Transverse colon (tissue), 4 donors: ENCODE measurements at regions of chr19 and their contacts with region 1.

Region 1: GRCh38 chr19:14147797-14148605 is 11.6 kb upstream of the ASF1B start:
- DNase-seq: peak; percentile 71
- H3K4me3 ChIP-seq: no peak overlapping the region
- H3K27ac ChIP-seq: peak overlapping the region; percentile 68 to 84 (median 77)
- H3K4me1 ChIP-seq: peaks cover 19 to 31% (median 26%) of the 10 kb centered on the region in 4 donors
- H3K27me3 ChIP-seq: no peaks in the 10 kb centered on the region
- CTCF ChIP-seq: peak; percentile 76 to 88 (median 82)
- EP300 ChIP-seq: no peak
- POLR2A ChIP-seq: no peak

Region 2: DNA sequence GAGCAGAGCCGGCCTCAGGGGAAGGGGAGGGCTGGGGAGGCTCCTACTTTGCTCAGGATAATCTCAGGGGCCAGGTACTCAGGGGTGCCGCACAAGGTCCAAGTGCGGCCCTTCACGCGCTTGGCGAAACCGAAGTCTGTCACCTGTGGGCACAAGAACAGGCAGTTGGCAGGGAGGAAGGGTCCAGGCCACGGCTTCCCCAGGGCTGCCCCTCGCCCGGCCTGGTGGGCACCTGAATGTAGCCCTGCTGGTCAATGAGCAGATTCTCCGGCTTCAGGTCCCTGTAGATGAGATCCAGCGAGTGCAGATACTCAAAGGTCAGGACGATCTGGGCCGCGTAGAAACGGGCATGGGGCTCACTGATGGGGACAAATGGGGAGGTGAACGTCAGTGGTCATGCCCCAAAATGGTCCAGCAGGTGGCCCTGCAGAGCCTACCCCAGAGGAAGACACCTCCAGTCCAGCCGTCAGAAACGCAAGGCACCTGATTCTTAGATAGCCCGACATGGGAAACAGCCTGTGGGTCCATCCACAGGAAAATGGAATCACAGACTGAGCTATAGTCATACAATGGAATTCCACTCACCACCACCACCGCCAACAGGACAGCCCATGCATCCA is 50.4 kb before region 1 on chr19:
- in situ Hi-C with region 1: no loop called
- intact Hi-C with region 1: no loop called
- DNase-seq: no peak
- H3K4me3 ChIP-seq: no peak overlapping the region
- H3K27ac ChIP-seq: no peak overlapping the region
- H3K4me1 ChIP-seq: no peaks in the 10 kb centered on the region
- H3K27me3 ChIP-seq: no peaks in the 10 kb centered on the region
- CTCF ChIP-seq: peak in 1 of 5 experiments; percentile 9
- EP300 ChIP-seq: no peak
- POLR2A ChIP-seq: no peak

Region 3: GRCh38 chr19:14237014-14237941 is 89.3 kb after region 1 on chr19:
- in situ Hi-C with region 1: no loop called
- intact Hi-C with region 1: no loop called
- DNase-seq: no peak
- H3K4me3 ChIP-seq: no peak overlapping the region
- H3K27ac ChIP-seq: no peak overlapping the region
- H3K4me1 ChIP-seq: peaks cover 0 to 4% (median 0%) of the 10 kb centered on the region in 4 donors
- H3K27me3 ChIP-seq: no peaks in the 10 kb centered on the region
- CTCF ChIP-seq: no peak
- EP300 ChIP-seq: no peak
- POLR2A ChIP-seq: no peak

Region 4: DNA sequence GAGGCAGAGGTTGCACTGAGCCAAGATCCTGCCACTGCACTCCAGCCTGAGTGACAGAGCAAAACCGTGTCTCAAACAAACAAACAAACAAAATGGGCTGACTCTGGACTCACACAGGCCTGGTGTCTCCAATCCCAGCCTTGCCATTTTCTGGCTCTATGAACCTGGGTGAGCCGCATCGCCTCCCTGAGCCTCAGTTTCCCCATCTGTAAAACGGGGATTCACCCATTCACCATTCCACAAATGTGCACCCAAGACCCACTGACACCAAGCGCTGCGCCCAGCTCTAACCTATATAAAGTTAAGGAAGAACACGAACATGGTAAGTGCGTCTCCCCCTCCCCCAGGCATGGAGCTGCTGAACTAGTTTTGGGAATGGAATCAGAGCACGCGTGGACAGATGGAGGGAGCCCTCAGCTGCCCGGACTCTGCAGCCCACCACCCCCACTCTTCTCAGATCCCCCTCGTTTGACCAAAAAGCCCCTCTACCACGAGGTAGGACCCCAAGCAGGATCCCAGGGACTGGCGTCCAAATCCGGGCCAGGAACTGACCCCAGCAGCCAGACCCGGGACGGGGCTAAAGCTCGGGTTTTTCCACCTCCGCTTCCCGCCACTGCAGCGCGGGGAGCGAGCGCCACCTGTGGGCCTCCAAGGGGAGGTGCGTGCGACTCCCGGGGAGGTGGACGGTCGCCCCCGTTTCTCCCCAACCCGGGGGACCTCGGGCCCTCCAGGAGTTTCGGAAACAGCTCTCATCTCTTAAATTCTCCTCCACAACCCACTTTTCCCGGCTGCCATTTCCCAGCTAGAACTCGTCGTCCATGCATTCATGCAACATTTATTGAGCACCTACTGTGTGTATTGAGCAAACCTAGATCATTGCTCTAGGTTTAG is 200.2 kb after region 1 on chr19:
- in situ Hi-C with region 1: no loop called
- intact Hi-C with region 1: loop called (anchors 5 kb)
- DNase-seq: peak; percentile 77
- H3K4me3 ChIP-seq: peak overlapping the region in 2 of 4 donors; percentile 26 to 34
- H3K27ac ChIP-seq: peak overlapping the region in 2 of 4 donors; percentile 2 to 13
- H3K4me1 ChIP-seq: peaks cover 0 to 17% (median 12%) of the 10 kb centered on the region in 4 donors
- H3K27me3 ChIP-seq: no peaks in the 10 kb centered on the region
- CTCF ChIP-seq: peak; percentile 96 to 99 (median 97)
- EP300 ChIP-seq: no peak
- POLR2A ChIP-seq: no peak

Region 5: DNA sequence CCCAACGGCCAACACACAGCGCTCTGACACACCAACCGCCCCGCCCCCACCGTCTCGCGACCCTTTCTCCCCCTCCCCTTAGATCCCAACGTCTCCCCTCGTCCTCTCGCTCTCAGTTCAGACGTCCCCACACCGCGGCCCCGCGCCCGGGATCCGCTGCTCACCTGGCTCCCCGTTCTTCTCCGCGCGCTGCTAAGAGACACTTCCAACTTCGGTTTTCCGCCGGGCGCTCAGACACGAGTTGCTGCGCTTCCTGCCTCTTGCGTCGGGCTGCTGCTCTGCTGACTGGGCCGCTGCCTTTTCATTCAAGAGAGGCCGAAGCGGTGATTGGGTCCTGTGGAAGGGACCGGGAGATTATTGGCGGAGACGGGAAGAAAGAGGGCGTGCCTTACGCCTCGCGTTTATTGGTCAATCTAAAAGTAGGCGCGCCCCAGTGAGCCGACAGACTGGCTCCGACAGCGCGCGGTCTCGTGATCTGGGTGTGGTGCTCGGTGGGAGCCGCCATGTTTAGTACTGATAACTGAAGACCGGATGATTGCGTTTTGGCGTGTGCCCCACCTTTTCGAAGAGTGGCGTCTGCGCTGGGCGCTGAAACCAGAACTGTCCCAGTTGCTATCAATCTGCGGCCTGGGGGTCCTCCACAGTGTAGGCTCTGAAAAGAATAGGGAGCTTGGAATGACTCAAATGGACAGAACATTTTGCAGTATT is 271.3 kb after region 1 on chr19 and contains the start of gene DDX39A:
- in situ Hi-C with region 1: no loop called
- intact Hi-C with region 1: loop called (anchors 5 kb)
- DNase-seq: peak; percentile 98
- H3K4me3 ChIP-seq: peak within 1 kb of the TSS; percentile 73 to 100 (median 83)
- H3K27ac ChIP-seq: peak within 1 kb of the TSS; percentile 94 to 100 (median 97)
- H3K4me1 ChIP-seq: peaks cover 17 to 34% (median 23%) of the 10 kb centered on the region in 4 donors
- H3K27me3 ChIP-seq: no peaks in the 10 kb centered on the region
- CTCF ChIP-seq: no peak
- EP300 ChIP-seq: no peak
- POLR2A ChIP-seq: peak; percentile 95
- total RNA-seq, gene DDX39A: 66.4 to 286 (median 163) TPM

Region 6: GRCh38 chr19:14472202-14472938 is 324.4 kb after region 1 on chr19:
- in situ Hi-C with region 1: no loop called
- intact Hi-C with region 1: loop called (anchors 10 kb)
- DNase-seq: peak; percentile 76
- H3K4me3 ChIP-seq: peak overlapping the region in 2 of 4 donors; percentile 25 to 38
- H3K27ac ChIP-seq: no peak overlapping the region
- H3K4me1 ChIP-seq: peaks cover 19 to 38% (median 34%) of the 10 kb centered on the region in 4 donors
- H3K27me3 ChIP-seq: peaks cover 34% of the 10 kb centered on the region
- CTCF ChIP-seq: peak; percentile 96 to 100 (median 99)
- EP300 ChIP-seq: no peak
- POLR2A ChIP-seq: no peak